ENCODE measurements at regions of chr19 and their contacts with region 1.

Region 1: GRCh38 chr19:54029930-54030490 is 33.7 kb downstream of the VSTM1 start:
- DNase-seq: peak; percentile 65 to 68
- H3K4me3 ChIP-seq: no peak overlapping the region
- H3K27ac ChIP-seq: no peak overlapping the region
- H3K4me1 ChIP-seq: peaks cover 15% of the 10 kb centered on the region
- H3K27me3 ChIP-seq: no peaks in the 10 kb centered on the region
- CTCF ChIP-seq: peak; percentile 87

Region 2: DNA sequence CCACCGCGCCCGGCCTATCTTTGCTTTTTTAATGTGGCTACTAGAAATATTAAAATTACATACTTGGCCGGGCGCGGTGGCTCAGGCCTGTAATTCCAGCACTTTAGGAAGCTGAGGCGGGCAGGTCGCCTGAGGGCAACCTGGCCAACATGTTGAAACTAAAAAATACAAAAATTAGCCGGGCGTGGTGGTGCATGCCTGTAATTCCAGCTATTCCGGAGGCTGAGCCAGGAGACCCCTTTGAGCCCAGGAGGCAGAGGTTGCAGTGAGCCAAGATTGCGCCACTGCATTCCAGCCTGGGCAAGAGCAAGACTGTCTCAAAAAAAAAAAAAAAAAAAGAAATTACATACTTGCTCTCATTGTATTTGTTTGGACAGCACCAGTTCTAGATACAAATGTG is 433.0 kb before region 1 on chr19:
- CTCF ChIA-PET with region 1: interaction called, 16 read pairs
- POLR2A ChIA-PET with region 1: no interaction called
- intact Hi-C with region 1: no loop called
- DNase-seq: peak; percentile 90 to 91
- H3K4me3 ChIP-seq: no peak overlapping the region
- H3K27ac ChIP-seq: peak overlapping the region; percentile 40
- H3K4me1 ChIP-seq: peaks cover 15% of the 10 kb centered on the region
- H3K27me3 ChIP-seq: no peaks in the 10 kb centered on the region
- CTCF ChIP-seq: no peak

Region 3: GRCh38 chr19:54011507-54012211 is 18.4 kb before region 1 on chr19:
- CTCF ChIA-PET with region 1: interaction called, 10 read pairs
- POLR2A ChIA-PET with region 1: no interaction called
- intact Hi-C with region 1: no loop called
- DNase-seq: no peak
- H3K4me3 ChIP-seq: no peak overlapping the region
- H3K27ac ChIP-seq: no peak overlapping the region
- H3K4me1 ChIP-seq: peaks cover 37% of the 10 kb centered on the region
- H3K27me3 ChIP-seq: no peaks in the 10 kb centered on the region
- CTCF ChIP-seq: no peak

Region 4: DNA sequence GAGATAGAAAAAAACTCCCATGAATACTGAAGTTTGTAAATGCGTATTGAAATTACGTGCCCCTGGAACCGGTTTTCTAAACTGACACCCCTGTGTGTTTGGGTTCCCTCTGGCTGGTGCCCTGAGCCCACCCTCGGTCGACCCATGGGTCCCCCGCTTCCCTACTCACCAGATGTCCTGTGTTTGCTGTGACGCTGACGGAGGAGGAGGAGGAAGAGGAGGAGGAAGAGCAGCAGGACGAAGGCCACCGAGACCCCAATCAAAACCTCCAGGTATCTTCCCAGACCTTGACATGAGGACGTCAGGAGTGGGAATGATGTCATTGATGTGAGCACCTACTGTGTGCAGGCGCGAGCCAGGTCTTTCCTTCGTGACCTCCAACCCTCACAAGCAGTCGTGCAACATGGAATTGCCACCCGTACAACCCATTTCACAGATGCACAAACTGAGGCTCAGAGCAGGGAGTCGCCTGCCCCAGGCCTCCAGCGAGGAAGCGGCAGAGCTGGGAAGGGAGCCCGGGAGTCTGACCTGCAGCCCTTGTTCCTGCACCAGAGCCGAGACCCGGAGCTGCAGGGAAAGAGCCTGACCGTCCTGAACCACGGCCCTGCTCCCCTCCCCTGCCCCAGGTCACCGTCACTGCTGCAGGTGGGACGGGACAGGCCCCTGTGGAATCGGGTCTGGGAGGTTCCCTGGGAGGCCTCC is 189.1 kb after region 1 on chr19:
- CTCF ChIA-PET with region 1: no interaction called
- POLR2A ChIA-PET with region 1: no interaction called
- intact Hi-C with region 1: no loop called
- DNase-seq: no peak
- H3K4me3 ChIP-seq: no peak overlapping the region
- H3K27ac ChIP-seq: no peak overlapping the region
- H3K4me1 ChIP-seq: no peaks in the 10 kb centered on the region
- H3K27me3 ChIP-seq: peaks cover 11% of the 10 kb centered on the region; the same call in 1 of the 2 replicates
- CTCF ChIP-seq: no peak

Region 5: DNA sequence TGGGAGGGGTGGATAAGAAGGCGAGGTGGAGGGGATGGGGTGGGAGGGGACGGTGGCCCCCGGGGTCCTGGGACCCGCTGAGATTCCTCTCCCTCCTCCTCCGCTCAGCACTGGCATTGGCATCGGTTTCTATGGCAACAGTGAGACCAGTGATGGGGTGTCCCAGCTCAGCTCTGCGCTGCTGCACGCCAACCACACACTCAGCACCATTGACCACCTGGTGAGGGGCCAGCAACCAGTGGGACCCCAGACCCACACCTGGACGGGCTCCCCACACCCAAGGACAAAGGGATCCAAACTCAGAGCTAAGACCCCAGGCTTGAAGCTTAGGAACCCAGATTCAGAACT is 391.1 kb after region 1 on chr19:
- CTCF ChIA-PET with region 1: interaction called, 16 read pairs
- POLR2A ChIA-PET with region 1: no interaction called
- intact Hi-C with region 1: no loop called
- DNase-seq: no peak
- H3K4me3 ChIP-seq: no peak overlapping the region
- H3K27ac ChIP-seq: no peak overlapping the region
- H3K4me1 ChIP-seq: peaks cover 3% of the 10 kb centered on the region
- H3K27me3 ChIP-seq: peaks cover 64% of the 10 kb centered on the region
- CTCF ChIP-seq: no peak

Measured in PC-9 (cell line).